ENCODE measurements at regions of chr3 and their contacts with region 1.

Region 1: GRCh38 chr3:190533511-190534277 is 19.8 kb downstream of the IL1RAP start:
- DNase-seq: peak; percentile 94
- H3K4me3 Mint-ChIP-seq: peak overlapping the region; percentile 69
- H3K27ac Mint-ChIP-seq: peak overlapping the region; percentile 96
- H3K4me1 Mint-ChIP-seq: peaks cover 55% of the 10 kb centered on the region
- H3K27me3 Mint-ChIP-seq: no peaks in the 10 kb centered on the region
- CTCF ChIP-seq: no peak

Region 2: DNA sequence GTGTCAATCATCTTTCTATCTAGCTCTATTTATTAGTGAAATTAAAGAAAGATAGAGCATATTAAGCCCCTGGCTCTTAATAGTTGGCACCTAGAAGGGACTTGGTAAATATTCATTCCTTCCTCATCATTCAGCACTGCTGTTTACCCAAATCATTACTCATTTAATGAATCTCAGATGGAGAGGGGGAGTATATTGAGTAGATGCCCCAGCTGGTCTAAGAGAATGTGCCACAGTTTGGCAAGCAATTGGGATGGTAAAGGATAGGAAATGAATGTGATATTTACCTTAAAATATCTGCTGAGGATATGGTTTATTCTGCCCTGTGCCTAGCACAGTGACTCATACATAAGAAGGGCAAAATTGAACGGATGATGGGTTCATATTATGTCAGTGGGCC is 13.8 kb before region 1 on chr3:
- CTCF ChIA-PET with region 1: interaction called, 7 read pairs
- POLR2A ChIA-PET with region 1: interaction called, 199 read pairs
- intact Hi-C with region 1: loop called (anchors 2 kb)
- DNase-seq: no peak
- H3K4me3 Mint-ChIP-seq: no peak overlapping the region
- H3K27ac Mint-ChIP-seq: no peak overlapping the region
- H3K4me1 Mint-ChIP-seq: peaks cover 37% of the 10 kb centered on the region
- H3K27me3 Mint-ChIP-seq: no peaks in the 10 kb centered on the region
- CTCF ChIP-seq: no peak

Region 3: GRCh38 chr3:190566043-190566933 is 32.6 kb after region 1 on chr3:
- CTCF ChIA-PET with region 1: no interaction called
- POLR2A ChIA-PET with region 1: interaction called, 61 read pairs
- intact Hi-C with region 1: loop called (anchors 2 kb)
- DNase-seq: peak; percentile 100
- H3K4me3 Mint-ChIP-seq: peak overlapping the region; percentile 48
- H3K27ac Mint-ChIP-seq: peak overlapping the region; percentile 66
- H3K4me1 Mint-ChIP-seq: peaks cover 20% of the 10 kb centered on the region
- H3K27me3 Mint-ChIP-seq: no peaks in the 10 kb centered on the region
- CTCF ChIP-seq: no peak

Region 4: DNA sequence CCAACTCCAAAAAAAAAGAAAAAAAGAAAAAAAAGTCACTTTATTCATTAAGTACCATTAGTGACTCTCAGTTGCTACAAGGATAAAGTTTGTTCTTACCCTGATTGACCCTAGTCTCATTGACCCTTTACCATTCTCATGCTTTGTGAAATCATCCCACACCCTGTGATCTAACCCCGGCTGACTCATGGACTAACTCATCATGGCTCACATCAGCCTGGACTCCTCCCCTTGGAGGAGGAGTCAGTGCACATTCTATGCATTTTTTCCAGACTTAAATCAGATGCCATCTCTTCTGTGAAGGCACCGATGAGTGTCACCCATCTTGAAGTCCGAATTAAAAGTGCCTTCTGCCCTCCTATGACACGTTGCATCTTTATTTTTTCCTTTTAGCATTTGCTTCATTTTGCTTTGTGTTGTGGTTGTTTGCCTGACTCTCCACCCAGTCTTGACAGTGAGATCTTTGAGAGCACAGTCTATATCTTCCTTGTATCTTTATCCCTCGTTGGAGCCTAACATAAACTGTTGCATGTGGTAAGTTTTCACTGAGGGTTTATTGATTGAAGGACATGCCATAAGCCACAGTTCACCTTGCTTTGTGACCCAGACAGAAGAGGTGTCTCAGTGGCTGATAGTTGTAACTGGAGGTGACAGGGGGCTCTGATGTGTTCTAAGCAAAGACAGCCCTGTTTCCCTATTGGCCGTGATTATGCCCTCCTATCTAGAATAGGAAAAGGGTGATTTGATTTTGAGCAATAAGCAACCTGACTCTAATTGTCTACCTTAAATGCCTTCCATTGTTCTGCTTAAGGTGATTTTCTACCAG is 52.3 kb after region 1 on chr3:
- CTCF ChIA-PET with region 1: interaction called, 3 read pairs
- POLR2A ChIA-PET with region 1: interaction called, 10 read pairs
- intact Hi-C with region 1: loop called (anchors 1 kb)
- DNase-seq: peak; percentile 97
- H3K4me3 Mint-ChIP-seq: peak overlapping the region; percentile 48
- H3K27ac Mint-ChIP-seq: peak overlapping the region; percentile 78
- H3K4me1 Mint-ChIP-seq: peaks cover 27% of the 10 kb centered on the region
- H3K27me3 Mint-ChIP-seq: no peaks in the 10 kb centered on the region
- CTCF ChIP-seq: no peak